H1 (cell line): ENCODE measurements at regions of chr19 and their contacts with region 1.

Region 1: DNA sequence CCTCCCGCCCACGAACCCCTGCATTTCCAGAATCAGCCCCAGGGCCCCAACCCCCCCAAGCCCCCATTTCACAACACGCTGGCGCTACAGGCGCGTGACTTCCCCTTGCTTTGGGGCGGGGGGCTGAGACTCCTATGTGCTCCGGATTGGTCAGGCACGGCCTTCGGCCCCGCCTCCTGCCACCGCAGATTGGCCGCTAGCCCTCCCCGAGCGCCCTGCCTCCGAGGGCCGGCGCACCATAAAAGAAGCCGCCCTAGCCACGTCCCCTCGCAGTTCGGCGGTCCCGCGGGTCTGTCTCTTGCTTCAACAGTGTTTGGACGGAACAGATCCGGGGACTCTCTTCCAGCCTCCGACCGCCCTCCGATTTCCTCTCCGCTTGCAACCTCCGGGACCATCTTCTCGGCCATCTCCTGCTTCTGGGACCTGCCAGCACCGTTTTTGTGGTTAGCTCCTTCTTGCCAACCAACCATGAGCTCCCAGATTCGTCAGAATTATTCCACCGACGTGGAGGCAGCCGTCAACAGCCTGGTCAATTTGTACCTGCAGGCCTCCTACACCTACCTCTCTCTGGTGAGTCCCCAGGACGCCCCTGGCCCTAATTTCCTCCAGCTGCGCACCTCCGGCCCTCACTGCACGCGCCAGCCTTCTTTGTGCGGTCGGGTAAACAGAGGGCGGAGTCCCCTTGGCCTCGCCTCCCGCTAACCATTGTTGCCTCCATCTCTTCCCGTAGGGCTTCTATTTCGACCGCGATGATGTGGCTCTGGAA is at the start of gene FTL:
- DNase-seq: peak; percentile 93 to 96
- H3K4me3 ChIP-seq: peak within 1 kb of the TSS; percentile 86 to 96 (median 92)
- H3K27ac ChIP-seq: peak within 1 kb of the TSS; percentile 76
- H3K4me1 ChIP-seq: peaks cover 4 to 18% (median 12%) of the 10 kb centered on the region in 4 experiments
- H3K27me3 ChIP-seq: no peaks in the 10 kb centered on the region
- CTCF ChIP-seq: no peak
- EP300 ChIP-seq: no peak
- POLR2A ChIP-seq: peak; percentile 98 to 99
- RAD21 ChIP-seq: no peak
- total RNA-seq, gene FTL: 1,751 and 1,764 TPM in 2 replicates

Region 2: GRCh38 chr19:48926909-48927308 is 38.3 kb before region 1 on chr19:
- CTCF ChIA-PET with region 1: interaction called, 14 read pairs
- POLR2A ChIA-PET with region 1: interaction called, 29 read pairs
- DNase-seq: no peak
- H3K4me3 ChIP-seq: no peak overlapping the region
- H3K27ac ChIP-seq: no peak overlapping the region
- H3K4me1 ChIP-seq: no peaks in the 10 kb centered on the region
- H3K27me3 ChIP-seq: no peaks in the 10 kb centered on the region
- CTCF ChIP-seq: no peak
- EP300 ChIP-seq: no peak
- POLR2A ChIP-seq: no peak
- RAD21 ChIP-seq: no peak

Region 3: DNA sequence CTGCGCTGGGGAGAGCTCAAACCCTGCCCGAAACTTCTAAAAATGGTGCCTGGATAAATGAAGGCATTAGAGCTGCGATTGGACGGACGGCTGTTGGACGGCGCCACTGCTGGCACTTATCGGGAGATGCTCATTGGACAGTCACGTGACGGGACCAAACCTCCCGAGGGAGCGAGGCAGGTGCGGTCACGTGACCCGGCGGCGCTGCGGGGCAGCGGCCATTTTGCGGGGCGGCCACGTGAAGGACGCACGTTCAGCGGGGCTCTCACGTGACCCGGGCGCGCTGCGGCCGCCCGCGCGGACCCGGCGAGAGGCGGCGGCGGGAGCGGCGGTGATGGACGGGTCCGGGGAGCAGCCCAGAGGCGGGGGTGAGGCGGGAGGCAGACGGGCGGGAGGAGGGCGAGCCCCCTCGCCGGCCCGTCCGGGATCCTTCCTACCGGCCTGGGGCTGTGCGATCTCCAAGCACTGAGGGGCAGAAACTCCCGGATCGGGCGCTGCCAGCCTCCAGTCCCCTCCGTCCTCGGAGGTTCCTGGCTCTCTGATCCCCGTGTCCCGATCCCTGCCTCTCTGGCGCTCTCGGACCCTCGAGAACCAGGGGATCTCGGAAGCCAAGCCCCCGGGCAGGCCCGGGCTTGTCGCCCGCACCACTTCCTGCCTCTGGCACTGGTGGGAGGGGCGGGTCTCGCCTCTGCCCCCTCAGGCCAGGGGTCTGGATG is 10.5 kb before region 1 on chr19 and contains the start of gene BAX:
- CTCF ChIA-PET with region 1: interaction called, 11 read pairs
- POLR2A ChIA-PET with region 1: interaction called, 27 read pairs
- DNase-seq: peak; percentile 91 to 99
- H3K4me3 ChIP-seq: peak within 1 kb of the TSS; percentile 75 to 93 (median 86)
- H3K27ac ChIP-seq: peak within 1 kb of the TSS; percentile 94
- H3K4me1 ChIP-seq: peaks cover 0 to 11% (median 6%) of the 10 kb centered on the region in 4 experiments; a peak in 5 of 7 replicates
- H3K27me3 ChIP-seq: no peaks in the 10 kb centered on the region; a peak in 1 of 7 replicates
- CTCF ChIP-seq: peak; percentile 8 to 15 (median 9); a peak in 2 of 4 replicates
- EP300 ChIP-seq: peak in 1 of 2 experiments; percentile 64; a peak in 1 of 3 replicates
- POLR2A ChIP-seq: peak in 1 of 2 experiments; percentile 85; a peak in 2 of 3 replicates
- RAD21 ChIP-seq: no peak; a peak in 1 of 4 replicates
- total RNA-seq, gene BAX: 257 and 295 TPM in 2 replicates

Region 4: DNA sequence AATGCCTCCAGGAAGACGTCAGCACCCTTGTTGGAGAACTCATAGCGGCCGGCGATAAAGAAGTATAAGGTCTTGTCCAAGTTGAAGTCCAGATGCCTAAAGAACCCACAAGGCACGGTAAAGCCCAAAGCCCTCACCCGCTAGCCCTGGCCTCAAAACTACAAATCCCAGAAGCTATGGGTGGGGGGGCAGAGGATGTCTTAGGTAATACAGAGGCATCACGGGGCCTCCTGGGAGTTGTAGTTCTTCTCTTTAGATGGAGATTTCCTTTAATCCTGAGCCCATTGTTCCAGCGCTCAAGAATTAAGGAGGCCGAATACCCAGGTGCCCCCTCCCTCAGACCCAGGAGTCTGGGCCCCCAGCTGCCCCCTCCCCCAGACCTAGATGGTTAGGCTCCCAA is 17.1 kb after region 1 on chr19:
- CTCF ChIA-PET with region 1: interaction called, 13 read pairs
- POLR2A ChIA-PET with region 1: interaction called, 56 read pairs
- DNase-seq: no peak
- H3K4me3 ChIP-seq: no peak overlapping the region
- H3K27ac ChIP-seq: no peak overlapping the region
- H3K4me1 ChIP-seq: no peaks in the 10 kb centered on the region
- H3K27me3 ChIP-seq: no peaks in the 10 kb centered on the region
- CTCF ChIP-seq: no peak
- EP300 ChIP-seq: no peak
- POLR2A ChIP-seq: no peak
- RAD21 ChIP-seq: no peak